Dendritic cell treated with granulocyte-macrophage colony-stimulating factor and Interleukin-4, amounts not matched to agents 40 ng/mL and 50 ng/mL, for 4 days (primary cell): ENCODE measurements at regions of chr3 and their contacts with region 1.

Region 1: GRCh38 chr3:123449102-123449996 is 459 bp upstream of the ADCY5 start:
- H3K4me3 Mint-ChIP-seq: peak overlapping the region; percentile 53
- H3K27ac Mint-ChIP-seq: no peak overlapping the region
- H3K4me1 Mint-ChIP-seq: no peaks in the 10 kb centered on the region
- H3K27me3 Mint-ChIP-seq: peaks cover 72% of the 10 kb centered on the region

Region 2: DNA sequence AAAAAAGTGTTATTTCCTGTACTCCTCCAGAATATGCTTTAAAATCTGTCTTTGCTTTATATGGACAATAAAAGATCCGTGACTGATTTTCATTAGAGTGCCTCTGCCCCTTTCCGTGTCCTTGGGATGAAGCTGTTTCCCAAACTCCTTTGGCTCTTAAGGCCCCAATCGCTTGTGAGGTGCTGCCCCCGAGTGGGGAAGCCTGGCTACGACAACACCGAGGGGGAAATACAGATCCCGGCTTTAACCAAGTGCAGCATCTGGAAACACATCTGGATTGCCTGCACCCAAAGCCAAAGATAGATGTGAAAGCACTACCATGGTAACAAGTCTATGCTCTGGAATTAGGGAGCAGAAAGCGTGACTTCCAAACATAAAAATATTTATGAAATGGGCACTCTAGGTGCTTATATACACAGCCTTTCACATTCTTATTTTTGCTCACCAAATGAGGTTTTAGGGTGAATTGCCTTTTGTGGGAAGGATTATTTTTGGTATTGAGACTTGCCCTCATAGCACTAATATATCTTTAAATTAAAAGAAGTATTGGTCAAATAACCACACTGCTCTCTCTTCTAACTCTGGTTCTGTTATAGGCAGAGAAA is 40.2 kb after region 1 on chr3:
- intact Hi-C with region 1: no loop called
- H3K4me3 Mint-ChIP-seq: no peak overlapping the region
- H3K27ac Mint-ChIP-seq: no peak overlapping the region
- H3K4me1 Mint-ChIP-seq: peaks cover 6% of the 10 kb centered on the region
- H3K27me3 Mint-ChIP-seq: peaks cover 3% of the 10 kb centered on the region

Region 3: DNA sequence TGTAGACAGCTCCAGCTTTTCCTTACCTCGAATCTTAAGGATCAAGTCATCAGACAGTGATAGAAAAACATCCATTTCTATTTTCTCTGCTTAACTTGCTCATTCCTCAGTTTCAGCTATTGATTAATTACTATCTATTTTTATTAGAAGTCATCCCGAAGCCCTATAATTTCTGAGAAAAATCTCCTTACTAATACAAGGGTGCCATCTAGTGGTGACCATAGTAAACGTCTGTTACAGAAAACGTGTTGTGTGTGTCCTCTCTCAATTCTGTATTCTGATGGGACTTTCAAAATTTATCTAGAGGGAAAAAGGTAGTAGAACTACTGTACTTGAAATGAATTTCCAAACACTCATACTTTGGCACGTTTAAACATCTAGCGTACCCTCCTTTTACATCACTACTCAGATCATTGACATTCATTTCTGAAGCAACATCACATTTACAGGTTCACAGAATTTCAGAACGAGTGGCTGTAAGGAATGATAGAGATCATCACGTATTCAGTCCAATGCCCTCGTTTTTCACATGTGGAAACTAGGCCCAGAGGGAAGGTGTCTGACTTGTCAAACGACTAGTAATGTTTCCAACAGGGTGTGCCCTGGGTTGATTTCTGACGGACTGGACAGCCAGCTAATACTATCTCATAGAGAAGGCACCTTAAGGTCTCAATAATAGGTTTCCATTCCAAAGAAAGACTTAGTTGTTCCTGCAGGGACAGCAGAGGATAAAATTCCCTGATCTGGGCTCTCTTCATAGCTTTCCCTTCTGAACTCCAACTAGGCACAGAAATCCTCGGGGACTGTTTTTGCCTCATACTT is 109.9 kb after region 1 on chr3:
- intact Hi-C with region 1: loop called (anchors 5 kb)
- H3K4me3 Mint-ChIP-seq: no peak overlapping the region
- H3K27ac Mint-ChIP-seq: no peak overlapping the region
- H3K4me1 Mint-ChIP-seq: peaks cover 14% of the 10 kb centered on the region
- H3K27me3 Mint-ChIP-seq: no peaks in the 10 kb centered on the region

Region 4: GRCh38 chr3:123642182-123642956 is 193.0 kb after region 1 on chr3:
- intact Hi-C with region 1: no loop called
- H3K4me3 Mint-ChIP-seq: no peak overlapping the region
- H3K27ac Mint-ChIP-seq: no peak overlapping the region
- H3K4me1 Mint-ChIP-seq: peaks cover 9% of the 10 kb centered on the region
- H3K27me3 Mint-ChIP-seq: peaks cover 10% of the 10 kb centered on the region

Region 5: GRCh38 chr3:123688241-123688747 is 238.9 kb after region 1 on chr3:
- intact Hi-C with region 1: no loop called
- H3K4me3 Mint-ChIP-seq: no peak overlapping the region
- H3K27ac Mint-ChIP-seq: peak overlapping the region; percentile 18
- H3K4me1 Mint-ChIP-seq: peaks cover 31% of the 10 kb centered on the region
- H3K27me3 Mint-ChIP-seq: no peaks in the 10 kb centered on the region